ENCODE measurements at regions of chr19 and their contacts with region 1.

Region 1: DNA sequence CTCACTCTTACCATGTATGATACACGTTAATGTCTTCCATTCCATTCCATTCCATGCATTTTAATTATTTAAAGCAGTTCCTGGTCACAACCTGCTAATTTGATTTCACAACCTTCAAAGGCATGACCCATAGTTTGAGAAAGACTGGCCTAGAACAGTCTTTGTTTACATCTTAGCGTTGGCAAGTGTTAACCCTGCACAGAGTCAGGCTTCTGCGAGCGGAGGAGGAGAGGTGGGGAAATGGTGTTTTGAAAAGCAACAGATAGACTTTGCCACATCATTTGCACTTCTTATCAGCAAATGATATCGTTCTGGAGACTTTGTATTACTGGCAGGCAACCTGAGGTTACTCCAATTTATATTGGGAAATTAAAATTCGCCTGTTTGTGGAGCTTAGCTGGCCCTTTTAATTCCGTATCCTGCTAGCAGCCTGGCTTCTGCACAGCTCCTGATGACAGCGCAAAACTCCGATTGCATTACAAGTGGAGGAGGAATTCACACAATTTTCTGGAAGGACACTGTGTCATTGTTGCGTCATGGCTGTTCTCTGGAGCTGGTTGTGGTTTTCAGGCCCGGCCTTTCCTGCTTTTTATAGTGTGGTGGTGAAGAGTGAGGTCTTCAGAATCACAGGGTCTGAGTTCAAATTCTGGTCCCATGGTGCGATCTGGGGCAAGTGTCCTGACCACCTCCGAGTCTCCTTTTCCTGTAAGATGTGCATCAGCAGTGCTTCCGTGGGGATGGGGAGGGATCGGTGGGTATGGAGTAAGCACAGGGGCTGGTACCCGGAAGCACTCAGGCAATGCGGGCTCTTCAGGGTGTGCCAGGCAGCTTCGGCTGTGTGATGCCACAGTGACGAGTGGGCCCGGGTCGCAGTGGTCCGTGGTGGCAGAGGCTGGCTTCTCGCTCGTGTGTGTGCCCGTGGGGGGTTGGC is 49.1 kb upstream of the EHD2 start:
- DNase-seq: peak; percentile 95
- H3K4me3 ChIP-seq: peak overlapping the region in 3 of 4 donors; percentile 5 to 27 (median 19)
- H3K27ac ChIP-seq: peak overlapping the region; percentile 93 to 98 (median 98)
- H3K4me1 ChIP-seq: peaks cover 0 to 95% (median 91%) of the 10 kb centered on the region in 4 donors
- H3K27me3 ChIP-seq: no peaks in the 10 kb centered on the region
- CTCF ChIP-seq: no peak
- EP300 ChIP-seq: peak; percentile 85 to 96 (median 94)
- POLR2A ChIP-seq: peak in 1 of 2 donors; percentile 40

Region 2: GRCh38 chr19:47600246-47601179 is 63.6 kb before region 1 on chr19:
- intact Hi-C with region 1: loop called (anchors 2 kb)
- DNase-seq: peak; percentile 100
- H3K4me3 ChIP-seq: peak overlapping the region; percentile 49 to 56 (median 52)
- H3K27ac ChIP-seq: peak overlapping the region; percentile 89 to 94 (median 92)
- H3K4me1 ChIP-seq: peaks cover 0 to 23% (median 21%) of the 10 kb centered on the region in 4 donors
- H3K27me3 ChIP-seq: no peaks in the 10 kb centered on the region
- CTCF ChIP-seq: no peak
- EP300 ChIP-seq: peak in 1 of 4 donors; percentile 83
- POLR2A ChIP-seq: peak; percentile 84 to 85

Region 3: DNA sequence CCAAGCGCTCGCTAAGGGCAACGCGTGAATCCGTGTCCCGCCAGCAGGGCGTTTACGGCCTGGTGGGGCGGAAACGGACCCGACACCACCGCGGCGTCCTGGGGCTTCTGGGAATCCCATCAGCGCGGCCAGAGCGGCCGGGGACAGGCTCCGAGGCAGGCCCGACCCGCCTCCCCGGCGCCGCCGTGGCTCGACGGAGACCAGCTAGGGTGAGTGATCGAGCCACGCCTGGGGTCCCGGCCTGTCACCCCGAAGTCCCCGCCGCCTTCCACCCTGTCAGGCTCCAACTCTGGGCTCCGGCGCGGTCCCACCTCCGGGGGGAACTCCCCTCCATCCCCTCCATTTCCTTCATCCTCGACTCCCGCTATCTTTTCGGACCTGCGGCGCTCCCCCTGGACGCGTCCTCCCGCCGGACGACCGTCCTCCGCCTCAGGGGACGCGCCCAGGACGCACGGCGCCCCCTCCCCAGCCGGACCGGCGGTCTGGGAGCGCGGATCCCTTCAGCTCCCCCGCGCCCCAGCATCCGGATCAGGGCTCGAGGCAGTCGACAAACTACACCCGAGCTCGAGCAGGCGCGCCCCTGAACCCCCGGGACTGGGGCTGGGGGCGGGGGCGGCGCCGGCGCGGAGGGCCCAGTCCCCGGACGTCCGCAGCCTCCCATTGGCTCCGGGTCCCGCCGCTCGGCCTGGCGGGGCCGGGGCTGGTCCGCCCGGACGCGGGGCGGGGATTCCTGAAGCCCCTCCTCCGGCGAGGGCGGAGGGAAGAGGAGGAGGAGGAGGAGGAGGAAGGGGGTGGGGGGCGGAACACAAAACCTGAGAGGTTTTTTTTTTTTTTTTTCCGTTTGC is 55.8 kb before region 1 on chr19:
- intact Hi-C with region 1: loop called (anchors 2 kb)
- DNase-seq: peak; percentile 97
- H3K4me3 ChIP-seq: peak overlapping the region; percentile 70 to 98 (median 86)
- H3K27ac ChIP-seq: peak overlapping the region; percentile 95 to 98 (median 98)
- H3K4me1 ChIP-seq: peaks cover 0 to 44% (median 39%) of the 10 kb centered on the region in 4 donors
- H3K27me3 ChIP-seq: no peaks in the 10 kb centered on the region
- CTCF ChIP-seq: peak in 3 of 4 experiments; percentile 28 to 57 (median 44)
- EP300 ChIP-seq: no peak
- POLR2A ChIP-seq: peak; percentile 76 to 77

Region 4: DNA sequence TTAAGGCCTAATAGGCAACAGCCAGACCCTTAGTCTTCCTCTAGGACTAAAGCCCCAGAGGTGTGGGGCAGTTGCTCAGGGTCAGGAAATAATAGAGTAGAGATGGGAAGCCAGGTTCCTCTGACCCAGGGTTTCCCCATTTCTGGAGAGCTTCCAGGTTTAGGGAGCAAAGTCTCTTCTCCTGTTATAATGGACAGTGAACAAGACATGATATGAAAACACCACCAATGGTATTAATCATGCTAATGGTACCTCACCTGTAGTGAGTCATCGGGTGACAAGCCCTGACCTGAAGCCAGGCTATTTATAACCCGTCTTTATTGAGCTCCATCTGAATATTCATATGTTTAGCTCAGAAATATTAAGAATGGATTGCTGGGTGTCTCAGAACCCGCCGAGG is 30.6 kb before region 1 on chr19:
- intact Hi-C with region 1: loop called (anchors 2 kb)
- DNase-seq: no peak
- H3K4me3 ChIP-seq: no peak overlapping the region
- H3K27ac ChIP-seq: peak overlapping the region; percentile 27 to 86 (median 84)
- H3K4me1 ChIP-seq: peaks cover 0 to 72% (median 63%) of the 10 kb centered on the region in 4 donors
- H3K27me3 ChIP-seq: no peaks in the 10 kb centered on the region
- CTCF ChIP-seq: no peak
- EP300 ChIP-seq: no peak
- POLR2A ChIP-seq: no peak

Measured in sigmoid colon (tissue), 7 donors.